ENCODE measurements at regions of chr3 and their contacts with region 1.

Region 1: DNA sequence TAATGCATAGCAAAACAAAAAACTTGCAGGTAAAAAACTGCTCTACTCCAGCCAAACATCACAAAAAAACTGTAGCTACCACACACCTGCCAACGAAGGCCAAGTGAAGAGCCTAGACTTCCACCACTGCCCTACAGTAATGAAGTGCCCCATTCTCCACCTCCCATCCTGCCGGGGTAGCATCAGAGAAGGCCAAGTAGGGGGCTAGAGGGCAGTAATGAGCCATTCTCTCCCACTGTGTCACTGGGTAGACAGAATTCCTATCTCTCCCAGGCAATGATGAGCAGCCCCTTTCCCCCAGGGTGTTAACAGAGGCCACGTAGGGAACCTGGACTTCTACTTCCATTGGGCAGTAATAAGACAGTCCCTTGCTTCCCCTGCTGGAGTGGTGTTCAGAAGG is 9.5 kb downstream of the SEC22C start:
- DNase-seq: peak; percentile 49
- H3K4me3 ChIP-seq: no peak overlapping the region
- H3K27ac ChIP-seq: no peak overlapping the region
- H3K4me1 ChIP-seq: no peaks in the 10 kb centered on the region
- H3K27me3 ChIP-seq: no peaks in the 10 kb centered on the region
- CTCF ChIP-seq: peak; percentile 58 to 62
- POLR2A ChIP-seq: no peak

Region 2: DNA sequence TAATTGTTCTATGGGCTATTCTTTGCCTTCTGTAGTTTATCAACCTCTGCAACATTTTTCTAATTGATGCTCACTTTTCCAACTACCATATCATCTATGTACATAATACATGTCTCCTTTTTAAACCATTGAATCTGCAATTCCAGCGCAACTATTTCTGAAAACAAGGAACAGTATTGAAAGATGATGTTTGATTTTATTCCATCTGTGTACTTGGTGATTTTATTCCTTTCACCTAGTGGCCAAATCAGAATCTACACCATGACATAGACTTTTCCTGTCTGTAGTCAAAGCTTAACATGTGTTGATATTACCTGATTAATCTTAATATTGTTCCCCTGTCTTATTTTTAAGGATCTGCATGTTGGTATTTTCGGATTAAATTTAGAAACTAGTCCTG is 41.2 kb after region 1 on chr3:
- CTCF ChIA-PET with region 1: interaction called, 4 read pairs
- POLR2A ChIA-PET with region 1: no interaction called
- dilution Hi-C with region 1: no loop called
- intact Hi-C with region 1: loop called (anchors 2 kb)
- DNase-seq: peak; percentile 36
- H3K4me3 ChIP-seq: no peak overlapping the region
- H3K27ac ChIP-seq: no peak overlapping the region
- H3K4me1 ChIP-seq: peaks cover 32% of the 10 kb centered on the region
- H3K27me3 ChIP-seq: no peaks in the 10 kb centered on the region
- CTCF ChIP-seq: peak in 1 of 2 donors; percentile 9
- POLR2A ChIP-seq: no peak

Region 3: GRCh38 chr3:42635111-42635510 is 62.8 kb after region 1 on chr3:
- CTCF ChIA-PET with region 1: no interaction called
- POLR2A ChIA-PET with region 1: no interaction called
- dilution Hi-C with region 1: no loop called
- intact Hi-C with region 1: loop called (anchors 1 kb)
- DNase-seq: peak; percentile 33
- H3K4me3 ChIP-seq: no peak overlapping the region
- H3K27ac ChIP-seq: no peak overlapping the region
- H3K4me1 ChIP-seq: no peaks in the 10 kb centered on the region
- H3K27me3 ChIP-seq: no peaks in the 10 kb centered on the region
- CTCF ChIP-seq: peak in 1 of 2 donors; percentile 4
- POLR2A ChIP-seq: no peak

Region 4: GRCh38 chr3:42749753-42750231 is 177.5 kb after region 1 on chr3:
- CTCF ChIA-PET with region 1: interaction called, 4 read pairs
- POLR2A ChIA-PET with region 1: no interaction called
- dilution Hi-C with region 1: no loop called
- intact Hi-C with region 1: loop called (anchors 1 kb)
- DNase-seq: no peak
- H3K4me3 ChIP-seq: no peak overlapping the region
- H3K27ac ChIP-seq: no peak overlapping the region
- H3K4me1 ChIP-seq: no peaks in the 10 kb centered on the region
- H3K27me3 ChIP-seq: peaks cover 0 to 2% of the 10 kb centered on the region in 2 experiments
- CTCF ChIP-seq: peak in 1 of 2 donors; percentile 6
- POLR2A ChIP-seq: no peak

Measured in endothelial cell of umbilical vein (primary cell).